ENCODE measurements at regions of chr1 and their contacts with region 1.

Region 1: GRCh38 chr1:91021686-91022517 is at the start of gene ZNF644:
- DNase-seq: peak; percentile 92
- ATAC-seq: peak; percentile 95 to 96
- total RNA-seq, gene ZNF644: 29.1 to 41.3 TPM

Region 2: GRCh38 chr1:90821793-90822359 is 200.0 kb before region 1 on chr1:
- intact Hi-C with region 1: no loop called
- DNase-seq: no peak
- ATAC-seq: no peak

Region 3: DNA sequence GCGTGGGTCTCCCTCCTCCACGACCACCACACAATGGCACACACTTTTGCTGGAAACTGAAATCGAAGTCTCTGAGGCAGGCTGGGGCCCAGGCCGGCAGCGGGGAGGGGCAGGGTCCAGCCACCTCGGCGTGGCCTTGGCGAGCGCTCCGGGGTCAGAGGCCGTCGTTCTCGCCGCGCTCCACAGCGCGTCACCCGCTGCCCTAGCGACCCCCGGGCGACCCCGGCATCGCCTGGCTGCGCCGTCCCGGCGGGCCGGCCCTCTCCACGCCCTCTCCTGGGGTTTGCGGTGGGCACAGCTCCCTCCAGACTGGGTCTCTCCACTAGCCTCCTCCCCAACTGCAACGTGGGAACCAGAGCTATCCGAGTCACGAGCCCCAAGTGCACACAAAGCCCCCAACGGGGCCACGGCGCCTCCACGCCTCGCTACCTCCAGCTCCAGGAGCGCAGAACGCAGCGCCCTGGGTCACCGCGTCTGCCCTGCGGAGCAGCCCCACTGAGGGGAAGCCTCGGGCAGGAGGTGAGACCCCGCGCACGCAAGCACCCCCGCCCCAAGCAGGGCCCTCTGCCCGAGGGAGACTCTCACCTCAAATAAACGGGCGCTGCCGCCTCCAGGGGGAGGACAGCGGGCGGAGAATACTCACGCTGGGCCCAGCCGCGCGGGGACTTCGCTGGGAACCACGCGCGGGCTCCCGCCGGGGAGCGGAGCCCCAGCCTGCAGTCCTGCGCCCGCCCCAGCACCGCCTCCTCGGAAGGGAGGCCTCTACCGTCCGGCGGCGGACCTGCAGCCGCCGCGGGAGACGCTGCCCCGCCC is 170.8 kb before region 1 on chr1:
- intact Hi-C with region 1: loop called in 1 of 2 experiments (anchors 5 kb)
- DNase-seq: peak; percentile 87
- ATAC-seq: peak; percentile 99

Region 4: DNA sequence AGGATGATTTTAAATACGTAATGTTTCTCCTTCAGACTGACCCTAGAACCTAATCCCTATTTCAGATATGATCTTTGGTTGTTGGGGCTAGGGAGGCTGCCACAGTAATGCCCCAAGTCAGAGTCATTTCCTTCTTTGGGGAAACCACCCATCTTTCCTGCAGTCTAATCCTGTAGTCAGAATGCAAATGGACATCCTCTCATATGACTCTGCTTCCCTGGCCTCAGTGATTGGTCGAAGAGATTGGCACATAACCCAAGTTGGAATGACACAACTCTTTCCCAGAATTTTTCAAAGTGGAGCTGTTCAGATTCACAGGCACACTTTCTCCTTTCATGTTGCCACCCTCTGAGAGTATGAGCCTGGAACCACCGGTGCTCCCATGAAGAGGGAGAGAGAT is 58.7 kb after region 1 on chr1:
- intact Hi-C with region 1: no loop called
- DNase-seq: no peak
- ATAC-seq: no peak

Measured in left cardiac atrium (tissue), 4 donors.